ENCODE measurements at regions of chr7 and their contacts with region 1.

Region 1: DNA sequence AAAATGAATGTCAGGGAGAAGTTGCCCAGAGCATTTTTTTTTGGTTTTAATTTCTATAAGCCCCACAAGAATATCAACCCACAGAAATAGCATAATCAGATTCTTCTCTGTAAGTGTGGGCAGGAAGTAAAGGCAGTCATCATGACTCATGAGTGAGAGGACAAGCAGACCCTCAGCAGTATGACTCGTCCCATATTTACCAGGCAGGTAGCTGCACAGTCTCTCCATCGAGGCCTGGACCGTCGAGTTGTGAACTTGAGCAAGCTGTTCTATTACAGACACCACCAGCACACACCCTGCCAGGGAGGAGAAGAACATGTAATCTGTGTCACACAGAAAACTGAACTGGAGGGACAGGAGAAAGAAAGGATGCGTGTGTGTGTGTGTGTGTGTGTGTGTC is 37.8 kb downstream of the AOAH start:
- DNase-seq: peak; percentile 30
- H3K4me3 Mint-ChIP-seq: no peak overlapping the region
- H3K27ac Mint-ChIP-seq: peak overlapping the region; percentile 59
- H3K4me1 Mint-ChIP-seq: peaks cover 40% of the 10 kb centered on the region
- H3K27me3 Mint-ChIP-seq: no peaks in the 10 kb centered on the region
- CTCF ChIP-seq: no peak

Region 2: DNA sequence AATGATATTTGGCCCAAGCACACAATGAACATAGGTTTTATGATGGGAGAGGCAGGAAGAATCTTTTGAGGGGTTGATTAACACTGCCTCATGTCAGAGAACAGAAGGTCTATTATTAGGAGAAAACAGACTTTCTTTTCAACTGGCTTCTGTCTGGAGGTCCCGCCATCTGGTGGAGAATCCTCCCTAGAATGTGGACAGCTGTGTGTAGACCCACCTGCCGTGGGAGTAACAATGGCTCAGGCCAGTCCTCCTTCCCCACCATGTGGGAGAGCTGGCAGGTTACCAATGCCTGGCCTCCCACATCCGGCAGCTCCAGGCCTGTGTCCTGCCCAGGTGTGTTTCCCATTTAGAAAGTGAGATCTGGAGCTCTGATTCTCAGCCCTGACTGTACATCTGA is 108.2 kb after region 1 on chr7:
- CTCF ChIA-PET with region 1: interaction called, 6 read pairs
- POLR2A ChIA-PET with region 1: interaction called, 12 read pairs
- intact Hi-C with region 1: no loop called
- DNase-seq: peak; percentile 62
- H3K4me3 Mint-ChIP-seq: no peak overlapping the region
- H3K27ac Mint-ChIP-seq: peak overlapping the region; percentile 85
- H3K4me1 Mint-ChIP-seq: peaks cover 25% of the 10 kb centered on the region
- H3K27me3 Mint-ChIP-seq: no peaks in the 10 kb centered on the region
- CTCF ChIP-seq: no peak

Region 3: GRCh38 chr7:36820527-36821170 is 134.2 kb after region 1 on chr7:
- CTCF ChIA-PET with region 1: no interaction called
- POLR2A ChIA-PET with region 1: interaction called, 3 read pairs
- intact Hi-C with region 1: loop called (anchors 10 kb)
- DNase-seq: peak; percentile 77
- H3K4me3 Mint-ChIP-seq: no peak overlapping the region
- H3K27ac Mint-ChIP-seq: peak overlapping the region; percentile 41
- H3K4me1 Mint-ChIP-seq: peaks cover 11% of the 10 kb centered on the region
- H3K27me3 Mint-ChIP-seq: no peaks in the 10 kb centered on the region
- CTCF ChIP-seq: no peak